B cell (primary cell): ENCODE measurements at regions of chr20 and their contacts with region 1.

Region 1: DNA sequence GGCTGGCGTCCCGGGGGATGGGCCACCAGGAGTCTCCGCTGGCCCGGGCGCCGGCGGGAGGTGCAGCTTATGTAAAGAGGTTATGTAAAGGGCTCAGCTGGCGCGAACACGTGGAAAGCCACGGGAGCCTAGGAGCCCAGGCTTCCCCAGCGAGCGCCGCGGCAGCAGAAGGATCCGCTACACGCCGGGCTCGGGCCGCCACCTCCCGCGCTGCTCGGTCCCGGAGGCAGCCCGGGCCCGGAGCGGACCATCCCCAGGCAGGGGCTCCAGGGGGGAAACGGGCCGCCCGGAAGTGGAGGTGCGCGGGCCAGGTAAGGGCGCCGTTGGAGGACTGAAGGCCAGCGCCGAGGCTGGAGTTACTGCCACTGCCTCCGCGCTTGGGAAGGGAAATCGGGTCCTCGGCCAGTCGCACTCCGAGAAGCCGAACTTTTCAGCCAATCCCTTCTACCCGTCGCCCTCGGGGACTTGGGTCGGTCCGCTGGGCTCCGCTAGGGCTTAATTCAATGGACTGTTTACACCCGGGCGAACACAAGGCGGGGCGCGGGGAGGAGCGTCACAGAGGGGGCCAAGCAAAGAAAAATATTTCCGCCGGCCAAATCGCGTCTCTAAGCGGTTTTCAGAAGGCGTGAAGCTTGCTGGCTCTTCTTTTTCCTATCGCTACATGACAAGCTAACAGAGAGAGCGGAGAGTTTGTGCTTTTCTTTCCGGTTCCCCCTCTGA is 398 bp downstream of the STK35 start:
- DNase-seq: peak; percentile 98
- ATAC-seq: peak; percentile 79
- H3K4me3 ChIP-seq: peak overlapping the region; percentile 71 to 92 (median 83)
- H3K4me3 Mint-ChIP-seq: peak overlapping the region; percentile 96
- H3K27ac ChIP-seq: peak overlapping the region; percentile 100
- H3K27ac Mint-ChIP-seq: peak overlapping the region; percentile 100
- H3K4me1 ChIP-seq: peaks cover 28 to 32% of the 10 kb centered on the region in 2 donors
- H3K4me1 Mint-ChIP-seq: peaks cover 44% of the 10 kb centered on the region
- H3K27me3 ChIP-seq: no peaks in the 10 kb centered on the region
- H3K27me3 Mint-ChIP-seq: no peaks in the 10 kb centered on the region
- CTCF ChIP-seq: no peak

Region 2: GRCh38 chr20:1894951-1895673 is 206.9 kb before region 1 on chr20 and contains the start of gene SIRPA:
- CTCF ChIA-PET with region 1: no interaction called
- POLR2A ChIA-PET with region 1: no interaction called
- intact Hi-C with region 1: loop called (anchors 5 kb)
- DNase-seq: peak; percentile 54
- ATAC-seq: peak; percentile 3
- H3K4me3 ChIP-seq: peak within 1 kb of the TSS; percentile 42 to 78 (median 60)
- H3K4me3 Mint-ChIP-seq: peak within 1 kb of the TSS; percentile 90
- H3K27ac ChIP-seq: no peak within 1 kb of the TSS
- H3K27ac Mint-ChIP-seq: peak within 1 kb of the TSS; percentile 82
- H3K4me1 ChIP-seq: peaks cover 41 to 50% of the 10 kb centered on the region in 2 donors
- H3K4me1 Mint-ChIP-seq: peaks cover 52% of the 10 kb centered on the region
- H3K27me3 ChIP-seq: peaks cover 0 to 10% (median 3%) of the 10 kb centered on the region in 4 experiments
- H3K27me3 Mint-ChIP-seq: peaks cover 6% of the 10 kb centered on the region
- CTCF ChIP-seq: no peak
- total RNA-seq, gene SIRPA: 10.2 TPM in 2 replicates

Region 3: GRCh38 chr20:1965520-1966351 is 136.3 kb before region 1 on chr20:
- CTCF ChIA-PET with region 1: interaction called, 5 read pairs
- POLR2A ChIA-PET with region 1: no interaction called
- intact Hi-C with region 1: loop called (anchors 5 kb)
- DNase-seq: peak; percentile 87
- ATAC-seq: peak; percentile 88
- H3K4me3 ChIP-seq: peak overlapping the region; percentile 9 to 57 (median 42)
- H3K4me3 Mint-ChIP-seq: peak overlapping the region; percentile 50
- H3K27ac ChIP-seq: no peak overlapping the region
- H3K27ac Mint-ChIP-seq: no peak overlapping the region
- H3K4me1 ChIP-seq: peaks cover 16 to 18% of the 10 kb centered on the region in 2 donors
- H3K4me1 Mint-ChIP-seq: peaks cover 18% of the 10 kb centered on the region
- H3K27me3 ChIP-seq: no peaks in the 10 kb centered on the region
- H3K27me3 Mint-ChIP-seq: peaks cover 2% of the 10 kb centered on the region
- CTCF ChIP-seq: peak; percentile 93

Region 4: GRCh38 chr20:2122936-2123335 is 20.9 kb after region 1 on chr20:
- CTCF ChIA-PET with region 1: interaction called, 27 read pairs
- POLR2A ChIA-PET with region 1: interaction called, 8 read pairs
- intact Hi-C with region 1: loop called (anchors 1 kb)
- DNase-seq: no peak
- ATAC-seq: no peak
- H3K4me3 ChIP-seq: no peak overlapping the region
- H3K4me3 Mint-ChIP-seq: no peak overlapping the region
- H3K27ac ChIP-seq: no peak overlapping the region
- H3K27ac Mint-ChIP-seq: peak overlapping the region; percentile 12
- H3K4me1 ChIP-seq: peaks cover 22% of the 10 kb centered on the region in 2 donors
- H3K4me1 Mint-ChIP-seq: peaks cover 72% of the 10 kb centered on the region
- H3K27me3 ChIP-seq: no peaks in the 10 kb centered on the region
- H3K27me3 Mint-ChIP-seq: no peaks in the 10 kb centered on the region
- CTCF ChIP-seq: no peak

Region 5: GRCh38 chr20:2421247-2421646 is 319.2 kb after region 1 on chr20:
- CTCF ChIA-PET with region 1: no interaction called
- POLR2A ChIA-PET with region 1: no interaction called
- intact Hi-C with region 1: no loop called
- DNase-seq: no peak
- ATAC-seq: no peak
- H3K4me3 ChIP-seq: no peak overlapping the region
- H3K4me3 Mint-ChIP-seq: no peak overlapping the region
- H3K27ac ChIP-seq: no peak overlapping the region
- H3K27ac Mint-ChIP-seq: no peak overlapping the region
- H3K4me1 ChIP-seq: no peaks in the 10 kb centered on the region
- H3K4me1 Mint-ChIP-seq: no peaks in the 10 kb centered on the region
- H3K27me3 ChIP-seq: no peaks in the 10 kb centered on the region
- H3K27me3 Mint-ChIP-seq: peaks cover 27% of the 10 kb centered on the region
- CTCF ChIP-seq: no peak

Region 6: GRCh38 chr20:2470423-2471193 is 368.6 kb after region 1 on chr20 and contains the start of gene SNRPB:
- CTCF ChIA-PET with region 1: no interaction called
- POLR2A ChIA-PET with region 1: interaction called, 5 read pairs
- intact Hi-C with region 1: loop called (anchors 2 kb)
- DNase-seq: peak; percentile 98
- ATAC-seq: peak; percentile 94
- H3K4me3 ChIP-seq: peak within 1 kb of the TSS; percentile 74 to 98 (median 91)
- H3K4me3 Mint-ChIP-seq: peak within 1 kb of the TSS; percentile 99
- H3K27ac ChIP-seq: peak within 1 kb of the TSS; percentile 96 to 98
- H3K27ac Mint-ChIP-seq: peak within 1 kb of the TSS; percentile 100
- H3K4me1 ChIP-seq: peaks cover 19 to 20% of the 10 kb centered on the region in 2 donors
- H3K4me1 Mint-ChIP-seq: peaks cover 37% of the 10 kb centered on the region
- H3K27me3 ChIP-seq: no peaks in the 10 kb centered on the region
- H3K27me3 Mint-ChIP-seq: no peaks in the 10 kb centered on the region
- CTCF ChIP-seq: no peak
- total RNA-seq, gene SNRPB: 117 and 123 TPM in 2 replicates